GM10248 (cell line): ENCODE measurements at regions of chr2 and their contacts with region 1.

Region 1: DNA sequence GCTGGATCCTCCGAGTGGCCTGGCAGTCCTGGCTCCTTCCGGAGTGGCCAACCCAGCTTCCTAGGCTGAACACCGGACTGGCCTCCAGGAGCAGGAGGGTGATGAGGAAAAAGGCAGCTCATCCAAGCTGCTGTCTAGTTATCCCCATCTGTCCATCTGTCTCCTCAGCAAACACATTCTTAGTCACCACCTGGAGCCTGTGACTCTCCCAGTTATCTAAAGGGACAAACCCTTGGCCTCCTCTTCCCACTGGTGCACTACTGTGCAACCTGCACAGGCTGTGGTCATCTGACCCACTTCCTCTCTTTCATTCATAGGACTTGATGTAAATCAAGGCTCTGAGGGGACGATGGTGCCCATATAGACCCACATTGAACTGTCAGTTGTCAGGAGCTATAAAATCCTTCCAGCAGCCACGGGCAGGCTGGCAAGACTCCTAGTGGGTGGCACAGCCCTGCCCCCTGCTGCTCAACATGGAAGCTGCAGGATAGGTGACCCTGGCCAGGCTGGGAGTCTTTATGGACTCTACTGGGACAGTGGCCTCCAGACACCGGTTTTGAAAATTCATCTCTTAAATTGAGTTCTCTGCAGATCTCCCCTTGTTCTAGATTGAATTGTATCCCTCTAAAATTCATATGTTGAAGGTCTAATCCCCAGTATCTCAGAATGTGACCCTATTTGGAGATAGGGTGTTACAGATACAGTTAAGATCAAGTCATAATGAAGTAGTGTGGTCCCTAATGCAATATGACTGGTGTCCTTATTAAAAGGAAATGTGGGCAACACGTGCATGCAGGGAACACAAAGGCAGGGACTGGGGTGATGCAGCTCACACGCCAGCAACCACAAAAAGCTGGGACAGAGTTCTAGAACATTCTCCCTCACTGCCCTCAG is 29.3 kb upstream of the DUSP2 start:
- DNase-seq: peak; percentile 83
- CTCF ChIP-seq: peak; percentile 86

Region 2: DNA sequence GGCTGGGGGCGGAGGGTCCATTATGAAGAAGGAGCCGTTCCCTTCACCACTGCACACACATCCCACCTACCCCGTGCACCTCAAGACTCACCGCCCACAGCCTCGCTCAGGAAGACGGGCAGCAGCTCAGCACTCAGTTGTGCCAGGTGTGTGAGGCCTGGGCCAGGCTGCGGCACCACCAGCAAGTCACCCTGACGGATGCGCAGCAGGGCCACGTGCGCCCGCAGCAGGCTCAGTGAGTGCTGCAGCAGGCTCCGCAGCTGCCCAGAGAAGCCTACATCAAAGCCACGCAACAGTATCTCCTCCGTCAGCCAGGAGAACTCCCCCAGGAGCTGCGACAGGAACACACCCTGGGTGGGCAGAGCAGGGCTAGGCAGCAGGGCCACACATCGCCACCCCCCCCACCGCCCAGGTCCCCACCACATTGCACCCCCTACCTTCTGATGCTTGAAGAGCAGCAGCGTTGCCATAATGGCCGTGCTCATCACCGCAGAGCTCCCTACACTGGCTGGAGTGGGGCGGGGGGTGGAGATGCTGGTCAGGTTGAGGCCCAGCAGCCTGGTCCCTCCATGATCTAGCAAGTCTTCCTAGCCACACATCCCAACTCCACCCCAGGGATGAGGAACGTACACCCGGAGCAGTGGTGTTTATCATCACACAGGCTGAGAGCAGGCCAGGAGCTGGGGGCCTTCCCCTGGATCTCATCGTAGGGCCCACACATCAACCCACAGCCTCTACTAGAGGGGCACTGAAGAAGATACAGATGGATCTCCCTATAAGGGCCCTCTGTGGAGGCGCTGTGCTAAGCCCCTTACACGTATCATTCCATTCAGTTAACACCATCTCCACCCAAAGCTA is 149.9 kb before region 1 on chr2:
- CTCF ChIA-PET with region 1: interaction called, 16 read pairs
- POLR2A ChIA-PET with region 1: no interaction called
- DNase-seq: no peak
- CTCF ChIP-seq: no peak

Region 3: GRCh38 chr2:96131152-96131812 is 43.2 kb before region 1 on chr2:
- CTCF ChIA-PET with region 1: interaction called, 658 read pairs
- POLR2A ChIA-PET with region 1: interaction called, 57 read pairs
- DNase-seq: no peak
- CTCF ChIP-seq: no peak

Region 4: GRCh38 chr2:96145036-96145847 is 29.3 kb before region 1 on chr2 and contains the start of gene DUSP2:
- CTCF ChIA-PET with region 1: interaction called, 658 read pairs
- POLR2A ChIA-PET with region 1: interaction called, 57 read pairs
- DNase-seq: peak; percentile 95
- CTCF ChIP-seq: no peak

Region 5: DNA sequence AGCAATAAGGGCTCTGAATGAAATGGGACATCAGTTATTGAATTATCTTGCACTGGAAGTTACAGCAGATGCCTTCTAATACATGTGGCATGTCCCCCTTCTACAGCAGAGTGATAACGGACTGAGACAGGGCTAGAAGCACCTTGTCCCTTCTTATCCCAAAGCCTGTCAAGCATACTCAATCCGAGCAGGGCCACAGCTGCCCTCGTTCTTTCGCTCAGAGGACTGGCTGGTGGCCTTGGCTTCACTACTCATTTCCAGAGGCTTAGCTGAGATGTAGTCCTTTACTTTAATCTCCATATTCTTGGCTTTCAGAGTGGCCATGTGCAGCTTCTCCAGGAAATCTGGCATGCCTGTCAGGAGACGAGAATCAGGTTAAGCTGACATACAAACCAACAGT is 12.1 kb after region 1 on chr2:
- CTCF ChIA-PET with region 1: interaction called, 51 read pairs
- POLR2A ChIA-PET with region 1: no interaction called
- DNase-seq: no peak
- CTCF ChIP-seq: no peak

Region 6: GRCh38 chr2:96208143-96209010 is 33.9 kb after region 1 on chr2 and contains the start of gene STARD7:
- CTCF ChIA-PET with region 1: interaction called, 43 read pairs
- POLR2A ChIA-PET with region 1: interaction called, 10 read pairs
- DNase-seq: peak; percentile 98
- CTCF ChIP-seq: no peak

Region 7: GRCh38 chr2:96241900-96242611 is 67.6 kb after region 1 on chr2:
- CTCF ChIA-PET with region 1: interaction called, 13 read pairs
- POLR2A ChIA-PET with region 1: no interaction called
- DNase-seq: peak; percentile 73
- CTCF ChIP-seq: no peak

Region 8: GRCh38 chr2:96374211-96374951 is 199.9 kb after region 1 on chr2:
- CTCF ChIA-PET with region 1: no interaction called
- POLR2A ChIA-PET with region 1: no interaction called
- DNase-seq: no peak
- CTCF ChIP-seq: no peak